ENCODE measurements at regions of chr9 and their contacts with region 1.

Region 1: GRCh38 chr9:81689343-81690190 is at the start of gene TLE1:
- DNase-seq: peak; percentile 97
- ATAC-seq: peak; percentile 89
- H3K4me3 ChIP-seq: peak within 1 kb of the TSS; percentile 63 to 72
- H3K27ac ChIP-seq: peak within 1 kb of the TSS; percentile 62; the same call in 1 of the 2 replicates
- H3K4me1 ChIP-seq: peaks cover 16 to 28% of the 10 kb centered on the region in 2 experiments
- H3K27me3 ChIP-seq: no peaks in the 10 kb centered on the region
- CTCF ChIP-seq: no peak
- POLR2A ChIP-seq: peak; percentile 23
- RAD21 ChIP-seq: no peak
- total RNA-seq, gene TLE1: 17.3 TPM

Region 2: GRCh38 chr9:81103597-81104471 is 585.7 kb before region 1 on chr9:
- CTCF ChIA-PET with region 1: no interaction called
- POLR2A ChIA-PET with region 1: no interaction called
- RAD21 ChIA-PET with region 1: no interaction called
- intact Hi-C with region 1: no loop called
- DNase-seq: no peak
- ATAC-seq: no peak
- H3K4me3 ChIP-seq: no peak overlapping the region
- H3K27ac ChIP-seq: no peak overlapping the region
- H3K4me1 ChIP-seq: no peaks in the 10 kb centered on the region
- H3K27me3 ChIP-seq: no peaks in the 10 kb centered on the region
- CTCF ChIP-seq: peak in 2 of 3 experiments; percentile 24 to 25; a peak in 2 of 6 replicates
- POLR2A ChIP-seq: no peak
- RAD21 ChIP-seq: no peak

Region 3: DNA sequence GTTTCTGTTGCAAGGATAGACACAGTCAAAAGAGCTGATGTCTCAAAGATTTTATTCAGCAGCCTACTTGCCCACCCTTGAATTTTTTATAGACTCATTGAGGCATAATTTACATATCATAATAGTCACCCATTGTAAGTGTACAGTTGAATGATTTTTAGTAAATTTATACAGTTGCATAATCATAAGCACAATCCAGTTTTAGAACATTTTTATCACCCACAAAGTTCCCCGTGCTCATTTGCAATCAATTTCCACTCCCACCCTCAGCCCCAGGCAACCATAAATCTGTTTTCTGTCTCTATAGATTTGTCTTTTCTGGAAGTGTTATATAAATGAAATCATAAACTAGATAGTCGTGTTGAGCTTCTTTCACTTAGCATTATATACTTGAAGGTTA is 517.9 kb before region 1 on chr9:
- CTCF ChIA-PET with region 1: no interaction called
- POLR2A ChIA-PET with region 1: no interaction called
- RAD21 ChIA-PET with region 1: no interaction called
- intact Hi-C with region 1: no loop called
- DNase-seq: no peak
- ATAC-seq: no peak
- H3K4me3 ChIP-seq: no peak overlapping the region
- H3K27ac ChIP-seq: no peak overlapping the region
- H3K4me1 ChIP-seq: no peaks in the 10 kb centered on the region
- H3K27me3 ChIP-seq: no peaks in the 10 kb centered on the region
- CTCF ChIP-seq: no peak
- POLR2A ChIP-seq: no peak
- RAD21 ChIP-seq: no peak

Region 4: GRCh38 chr9:81363916-81364480 is 325.6 kb before region 1 on chr9:
- CTCF ChIA-PET with region 1: no interaction called
- POLR2A ChIA-PET with region 1: no interaction called
- RAD21 ChIA-PET with region 1: no interaction called
- intact Hi-C with region 1: no loop called
- DNase-seq: no peak
- ATAC-seq: no peak
- H3K4me3 ChIP-seq: no peak overlapping the region
- H3K27ac ChIP-seq: no peak overlapping the region
- H3K4me1 ChIP-seq: no peaks in the 10 kb centered on the region
- H3K27me3 ChIP-seq: no peaks in the 10 kb centered on the region
- CTCF ChIP-seq: no peak
- POLR2A ChIP-seq: no peak
- RAD21 ChIP-seq: no peak

Region 5: GRCh38 chr9:81461196-81461595 is 228.4 kb before region 1 on chr9:
- CTCF ChIA-PET with region 1: no interaction called
- POLR2A ChIA-PET with region 1: no interaction called
- RAD21 ChIA-PET with region 1: no interaction called
- intact Hi-C with region 1: loop called (anchors 5 kb)
- DNase-seq: no peak
- ATAC-seq: no peak
- H3K4me3 ChIP-seq: no peak overlapping the region
- H3K27ac ChIP-seq: no peak overlapping the region
- H3K4me1 ChIP-seq: no peaks in the 10 kb centered on the region
- H3K27me3 ChIP-seq: no peaks in the 10 kb centered on the region
- CTCF ChIP-seq: no peak
- POLR2A ChIP-seq: no peak
- RAD21 ChIP-seq: no peak

Region 6: GRCh38 chr9:81526587-81526986 is 163.0 kb before region 1 on chr9:
- CTCF ChIA-PET with region 1: interaction called, 5 read pairs
- POLR2A ChIA-PET with region 1: no interaction called
- RAD21 ChIA-PET with region 1: interaction called in 1 of 2 experiments, 3 read pairs
- intact Hi-C with region 1: loop called (anchors 1 kb)
- DNase-seq: no peak
- ATAC-seq: no peak
- H3K4me3 ChIP-seq: no peak overlapping the region
- H3K27ac ChIP-seq: no peak overlapping the region
- H3K4me1 ChIP-seq: peaks cover 3 to 25% of the 10 kb centered on the region in 2 experiments; a peak in 3 of 4 replicates
- H3K27me3 ChIP-seq: no peaks in the 10 kb centered on the region
- CTCF ChIP-seq: no peak
- POLR2A ChIP-seq: no peak
- RAD21 ChIP-seq: no peak

Region 7: DNA sequence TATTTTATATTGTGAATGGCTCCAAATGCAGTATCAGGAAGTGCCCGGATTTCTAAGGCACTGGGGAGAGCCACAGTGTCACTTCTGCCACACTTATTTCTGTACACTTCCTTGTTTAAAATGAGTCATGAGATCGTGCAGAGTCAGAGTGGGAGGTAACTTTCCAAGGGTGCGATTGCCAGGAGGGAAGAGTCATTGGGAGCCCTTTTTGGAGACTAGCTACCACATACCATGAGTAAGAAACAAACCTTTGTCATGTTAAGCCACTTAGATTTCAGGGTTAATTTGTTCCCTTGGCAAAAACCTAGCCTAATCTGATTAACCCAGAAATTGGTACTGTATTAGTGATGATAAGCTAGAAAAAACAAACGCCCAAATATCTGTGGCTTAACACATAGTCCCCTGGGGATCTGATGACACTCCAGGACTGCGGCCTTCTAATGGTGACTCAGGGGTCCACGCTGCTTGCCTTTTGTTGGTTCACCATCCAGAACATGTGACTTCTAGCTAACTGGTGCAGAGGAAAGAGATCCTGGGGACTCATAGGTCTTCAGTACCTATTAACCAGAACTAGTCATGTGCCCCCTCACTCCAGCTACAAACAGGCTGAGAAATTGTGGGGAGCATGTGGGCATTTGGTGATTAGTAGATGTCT is 48.4 kb after region 1 on chr9:
- CTCF ChIA-PET with region 1: no interaction called
- POLR2A ChIA-PET with region 1: interaction called, 3 read pairs
- RAD21 ChIA-PET with region 1: no interaction called
- intact Hi-C with region 1: loop called (anchors 1 kb)
- DNase-seq: peak; percentile 89
- ATAC-seq: peak; percentile 91
- H3K4me3 ChIP-seq: peak overlapping the region in 1 of 2 experiments; percentile 1; a peak in 1 of 4 replicates
- H3K27ac ChIP-seq: peak overlapping the region; percentile 51
- H3K4me1 ChIP-seq: peaks cover 8 to 22% of the 10 kb centered on the region in 2 experiments; a peak in 3 of 4 replicates
- H3K27me3 ChIP-seq: no peaks in the 10 kb centered on the region
- CTCF ChIP-seq: no peak
- POLR2A ChIP-seq: no peak
- RAD21 ChIP-seq: peak; percentile 30

Region 8: GRCh38 chr9:82036086-82036485 is 346.5 kb after region 1 on chr9:
- CTCF ChIA-PET with region 1: no interaction called
- POLR2A ChIA-PET with region 1: no interaction called
- RAD21 ChIA-PET with region 1: no interaction called
- intact Hi-C with region 1: loop called (anchors 5 kb)
- DNase-seq: no peak
- ATAC-seq: no peak
- H3K4me3 ChIP-seq: no peak overlapping the region
- H3K27ac ChIP-seq: no peak overlapping the region
- H3K4me1 ChIP-seq: peaks cover 3 to 7% of the 10 kb centered on the region in 2 experiments; a peak in 2 of 4 replicates
- H3K27me3 ChIP-seq: no peaks in the 10 kb centered on the region
- CTCF ChIP-seq: no peak
- POLR2A ChIP-seq: no peak
- RAD21 ChIP-seq: no peak